Ascending aorta (tissue), 2 donors: ENCODE measurements at regions of chr12 and their contacts with region 1.

Region 1: GRCh38 chr12:54279866-54280467 is at the start of gene CBX5:
- DNase-seq: peak; percentile 95 to 99
- H3K4me3 ChIP-seq: peak within 1 kb of the TSS; percentile 68 to 77
- H3K27ac ChIP-seq: peak within 1 kb of the TSS; percentile 88 to 94
- H3K4me1 ChIP-seq: peaks cover 7 to 44% of the 10 kb centered on the region in 2 donors
- H3K27me3 ChIP-seq: no peaks in the 10 kb centered on the region
- CTCF ChIP-seq: no peak
- total RNA-seq, gene CBX5: 19.4 TPM

Region 2: DNA sequence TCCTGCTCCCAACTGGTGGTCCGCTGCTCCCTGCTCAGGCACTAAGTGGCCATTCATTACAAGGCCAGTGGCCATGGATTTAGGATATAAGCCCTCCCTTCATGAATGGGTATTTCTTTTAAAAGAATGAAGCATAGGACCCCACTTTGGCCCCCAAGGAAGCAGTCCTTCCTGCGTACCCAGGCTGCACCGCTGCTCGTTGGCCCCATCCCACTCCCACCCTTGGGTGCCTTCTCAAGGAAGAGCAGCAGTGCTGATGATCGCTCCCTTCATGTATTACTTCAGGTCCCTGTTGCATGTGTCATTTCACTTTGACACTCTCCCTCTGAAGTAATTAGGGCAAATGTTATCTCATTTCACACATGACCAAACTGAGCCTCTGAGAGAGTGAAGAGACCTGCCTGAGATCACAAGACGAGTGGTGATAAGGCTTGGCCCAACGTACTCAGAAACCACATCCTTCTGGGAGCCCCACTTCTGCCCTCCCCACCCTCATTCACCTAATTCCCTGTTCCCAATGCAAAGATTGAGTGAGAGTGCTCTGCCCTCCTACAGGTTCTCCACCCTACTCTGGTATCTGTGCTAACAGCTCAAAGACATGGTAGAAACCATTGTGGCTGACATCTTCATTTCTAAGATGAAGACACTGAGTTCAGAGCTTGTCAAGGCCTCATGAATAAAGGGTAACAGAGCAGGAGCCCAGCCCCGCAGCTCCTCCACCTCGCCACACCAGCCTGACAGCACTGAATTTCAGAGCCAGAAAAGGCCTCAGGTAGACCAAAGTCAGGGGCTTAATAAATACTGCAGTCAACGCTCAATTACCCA is 1617.7 kb before region 1 on chr12:
- intact Hi-C with region 1: no loop called
- DNase-seq: peak in 1 of 2 donors; percentile 35
- H3K4me3 ChIP-seq: no peak overlapping the region
- H3K27ac ChIP-seq: no peak overlapping the region
- H3K4me1 ChIP-seq: no peaks in the 10 kb centered on the region
- H3K27me3 ChIP-seq: no peaks in the 10 kb centered on the region
- CTCF ChIP-seq: no peak

Region 3: GRCh38 chr12:53727310-53728041 is 552.5 kb before region 1 on chr12 and contains the start of gene CALCOCO1:
- intact Hi-C with region 1: loop called (anchors 2 kb)
- DNase-seq: peak; percentile 96 to 99
- H3K4me3 ChIP-seq: peak within 1 kb of the TSS; percentile 81 to 87
- H3K27ac ChIP-seq: peak within 1 kb of the TSS; percentile 66 to 85
- H3K4me1 ChIP-seq: peaks cover 8 to 27% of the 10 kb centered on the region in 2 donors
- H3K27me3 ChIP-seq: no peaks in the 10 kb centered on the region
- CTCF ChIP-seq: no peak
- total RNA-seq, gene CALCOCO1: 258 TPM

Region 4: GRCh38 chr12:54214553-54215406 is 65.2 kb before region 1 on chr12:
- intact Hi-C with region 1: loop called (anchors 5 kb)
- DNase-seq: peak in 1 of 2 donors; percentile 91
- H3K4me3 ChIP-seq: peak overlapping the region in 1 of 2 donors; percentile 42
- H3K27ac ChIP-seq: no peak overlapping the region
- H3K4me1 ChIP-seq: peaks cover 7 to 13% of the 10 kb centered on the region in 2 donors
- H3K27me3 ChIP-seq: no peaks in the 10 kb centered on the region
- CTCF ChIP-seq: peak; percentile 90 to 99 (median 98)

Region 5: GRCh38 chr12:54259194-54260011 is 20.6 kb before region 1 on chr12:
- intact Hi-C with region 1: loop called (anchors 1 kb)
- DNase-seq: peak; percentile 38 to 89
- H3K4me3 ChIP-seq: peak overlapping the region; percentile 46 to 58
- H3K27ac ChIP-seq: peak overlapping the region; percentile 68 to 84
- H3K4me1 ChIP-seq: peaks cover 0 to 36% of the 10 kb centered on the region in 2 donors
- H3K27me3 ChIP-seq: no peaks in the 10 kb centered on the region
- CTCF ChIP-seq: no peak

Region 6: DNA sequence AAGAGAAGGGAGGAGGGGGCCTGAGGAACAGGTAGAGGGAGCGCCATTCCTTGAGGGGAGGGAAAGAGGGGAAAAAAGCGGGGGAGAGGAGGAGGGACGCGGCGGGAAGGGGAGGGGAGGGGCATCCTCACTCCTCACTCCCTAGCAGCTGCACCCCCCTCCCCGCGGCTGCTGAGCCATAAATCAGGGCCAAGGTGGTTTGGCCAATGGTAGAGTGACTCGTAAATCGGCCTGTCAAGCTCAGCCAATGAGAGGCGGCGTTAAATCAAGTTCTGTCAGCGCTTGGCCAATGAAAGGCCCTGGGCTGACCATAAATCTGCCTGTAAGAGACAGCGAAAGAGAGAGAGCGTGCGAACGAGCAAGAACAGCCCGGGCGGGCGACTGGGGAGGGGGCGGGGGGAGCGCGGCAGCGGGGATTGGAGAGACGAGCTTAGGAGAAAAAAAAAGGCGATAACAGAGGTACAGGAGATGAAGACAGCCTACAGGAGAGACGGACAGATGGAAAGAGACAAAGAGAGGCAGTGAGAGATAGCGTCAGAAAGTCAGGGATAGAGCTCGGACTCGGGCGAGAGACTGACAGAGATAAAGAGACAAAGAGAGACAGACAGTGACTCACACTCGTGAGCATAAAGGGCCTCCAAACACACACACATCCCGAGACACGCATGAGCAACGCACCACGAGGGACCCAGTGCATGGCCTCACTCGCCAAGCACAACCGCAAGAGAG is 79.2 kb after region 1 on chr12:
- intact Hi-C with region 1: loop called (anchors 1 kb)
- DNase-seq: peak; percentile 96 to 99
- H3K4me3 ChIP-seq: peak overlapping the region; percentile 59 to 74
- H3K27ac ChIP-seq: peak overlapping the region; percentile 78 to 80
- H3K4me1 ChIP-seq: peaks cover 0 to 15% of the 10 kb centered on the region in 2 donors
- H3K27me3 ChIP-seq: no peaks in the 10 kb centered on the region
- CTCF ChIP-seq: no peak